Left colon (tissue), 2 donors: ENCODE measurements at regions of chr1 and their contacts with region 1.

Region 1: DNA sequence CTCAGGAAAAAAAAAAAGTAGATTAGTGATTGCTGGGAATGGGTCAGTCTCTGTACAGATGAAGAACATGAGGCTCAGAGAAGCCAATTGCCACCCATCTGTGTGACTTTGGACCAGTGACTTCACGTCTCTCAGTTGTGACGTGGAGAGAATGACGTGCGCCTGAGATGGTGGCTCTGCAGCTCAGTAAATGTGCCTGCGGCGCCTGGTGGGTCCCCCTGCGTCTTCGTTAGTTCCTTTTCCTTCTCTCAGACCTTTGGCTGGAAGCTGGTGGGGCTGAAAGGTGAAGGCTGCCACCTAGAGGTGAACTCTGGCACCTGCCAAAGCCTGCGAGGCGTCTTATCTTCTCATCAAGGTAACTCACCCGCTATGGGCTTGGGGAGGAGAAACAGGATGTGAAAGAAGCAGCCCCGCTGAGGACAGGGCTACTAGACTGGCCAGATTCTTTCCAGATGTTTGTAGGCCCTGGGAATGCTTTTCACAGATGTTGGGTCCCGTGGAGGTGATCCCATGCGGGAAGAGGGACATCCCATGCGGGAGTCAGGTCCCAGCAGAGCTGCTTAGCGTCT is 8.7 kb upstream of the E2F2 start:
- DNase-seq: peak; percentile 87 to 92
- ATAC-seq: peak; percentile 82

Region 2: GRCh38 chr1:23496490-23497181 is 43.1 kb before region 1 on chr1:
- intact Hi-C with region 1: loop called in 1 of 2 experiments (anchors 5 kb)
- DNase-seq: no peak
- ATAC-seq: peak; percentile 8

Region 3: DNA sequence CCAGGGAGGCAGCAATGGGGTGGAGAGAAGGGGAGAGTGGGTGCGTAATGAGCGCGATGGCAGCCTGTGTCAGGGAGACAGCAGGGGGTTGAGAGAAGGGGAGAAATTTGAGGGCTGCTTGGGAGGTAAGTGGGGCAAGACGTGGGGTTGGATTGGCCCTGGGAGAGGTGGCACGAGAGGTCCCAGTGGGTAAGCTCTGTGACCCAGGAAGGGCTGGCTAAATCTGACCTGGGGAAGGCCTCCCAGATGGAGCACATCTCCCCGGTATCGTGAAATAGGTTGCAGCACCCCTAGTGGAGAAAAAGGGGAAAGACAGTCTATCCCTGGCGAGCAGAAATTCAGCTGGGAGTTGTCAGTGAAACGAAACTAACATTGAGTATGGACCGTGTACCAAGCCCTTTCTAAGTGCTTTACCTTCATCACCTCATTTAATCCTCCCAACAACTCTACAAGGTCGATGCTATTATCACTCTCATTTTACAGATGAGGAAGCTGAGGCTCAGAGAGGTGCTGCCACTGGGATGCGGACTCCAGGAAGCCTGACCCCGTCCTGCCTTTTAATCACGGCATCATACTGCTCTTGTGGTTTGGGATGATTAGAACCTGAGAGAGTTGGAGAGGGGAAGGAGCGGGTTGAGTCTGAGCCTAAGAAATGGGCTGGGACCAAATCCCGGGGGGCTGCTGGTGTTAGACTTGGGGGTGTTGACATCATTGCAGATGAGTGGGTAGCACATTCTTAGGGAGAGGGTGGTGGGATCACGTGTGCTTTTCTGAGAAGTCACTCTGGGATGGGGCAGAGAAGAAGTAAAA is 95.3 kb after region 1 on chr1:
- intact Hi-C with region 1: loop called (anchors 2 to 5 kb)
- DNase-seq: peak; percentile 45 to 53
- ATAC-seq: peak; percentile 88

Region 4: GRCh38 chr1:23651069-23651808 is 111.5 kb after region 1 on chr1:
- intact Hi-C with region 1: no loop called
- DNase-seq: no peak
- ATAC-seq: no peak

Region 5: GRCh38 chr1:23865543-23865930 is 325.8 kb after region 1 on chr1:
- intact Hi-C with region 1: no loop called
- DNase-seq: peak; percentile 28 to 36
- ATAC-seq: peak; percentile 29